ENCODE measurements at regions of chr2 and their contacts with region 1.

Region 1: GRCh38 chr2:196205881-196206435 is 34.6 kb upstream of the STK17B start:
- DNase-seq: no peak
- ATAC-seq: no peak
- H3K4me3 Mint-ChIP-seq: no peak overlapping the region
- H3K27ac Mint-ChIP-seq: peak overlapping the region; percentile 51
- H3K4me1 Mint-ChIP-seq: peaks cover 47% of the 10 kb centered on the region
- H3K27me3 Mint-ChIP-seq: no peaks in the 10 kb centered on the region
- CTCF ChIP-seq: no peak

Region 2: GRCh38 chr2:196101325-196101991 is 104.5 kb before region 1 on chr2:
- CTCF ChIA-PET with region 1: no interaction called
- POLR2A ChIA-PET with region 1: interaction called, 3 read pairs
- intact Hi-C with region 1: loop called (anchors 1 kb)
- DNase-seq: peak; percentile 34
- ATAC-seq: peak; percentile 87
- H3K4me3 Mint-ChIP-seq: peak overlapping the region; percentile 40
- H3K27ac Mint-ChIP-seq: peak overlapping the region; percentile 81
- H3K4me1 Mint-ChIP-seq: peaks cover 77% of the 10 kb centered on the region
- H3K27me3 Mint-ChIP-seq: no peaks in the 10 kb centered on the region
- CTCF ChIP-seq: no peak

Region 3: DNA sequence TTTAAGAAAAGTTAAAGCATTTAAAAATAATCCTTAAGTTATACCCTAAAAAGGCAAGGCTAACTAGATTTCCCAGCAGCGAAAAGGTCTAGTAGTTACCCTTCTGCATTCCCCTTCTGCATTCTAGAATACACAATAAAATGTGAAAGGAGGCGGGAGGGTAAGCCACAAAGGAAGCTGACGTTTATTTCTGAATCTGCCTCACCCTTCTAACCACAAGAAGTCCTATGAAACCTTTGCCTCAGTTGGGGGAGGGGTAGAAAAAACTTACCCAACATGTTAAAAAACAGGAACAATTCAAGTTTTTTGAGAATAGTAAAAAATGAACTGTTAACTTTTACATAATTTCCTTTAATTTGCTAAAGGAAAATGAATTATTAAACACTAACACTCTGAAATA is 45.9 kb before region 1 on chr2:
- CTCF ChIA-PET with region 1: no interaction called
- POLR2A ChIA-PET with region 1: interaction called, 6 read pairs
- intact Hi-C with region 1: loop called (anchors 1 kb)
- DNase-seq: no peak
- ATAC-seq: peak; percentile 75
- H3K4me3 Mint-ChIP-seq: peak overlapping the region; percentile 57
- H3K27ac Mint-ChIP-seq: peak overlapping the region; percentile 84
- H3K4me1 Mint-ChIP-seq: peaks cover 86% of the 10 kb centered on the region
- H3K27me3 Mint-ChIP-seq: no peaks in the 10 kb centered on the region
- CTCF ChIP-seq: no peak

Region 4: DNA sequence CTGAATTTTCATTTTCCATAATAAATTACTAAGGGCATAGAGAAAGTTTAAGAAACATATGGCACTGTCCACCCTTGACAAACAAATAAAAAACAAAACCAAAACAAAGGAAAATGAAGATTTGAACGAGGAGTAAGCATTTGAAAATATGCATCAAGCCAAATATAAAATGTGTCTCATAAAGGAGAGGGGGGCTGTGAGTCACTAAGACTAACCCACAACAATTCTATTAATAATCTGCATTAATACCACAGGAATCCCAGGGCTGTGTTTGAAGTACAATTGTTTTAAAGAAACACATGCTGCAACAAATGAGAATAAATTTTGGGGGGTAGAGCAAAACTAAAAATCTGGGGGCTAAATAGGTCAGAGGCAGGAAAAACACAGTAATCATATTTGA is 19.3 kb after region 1 on chr2:
- CTCF ChIA-PET with region 1: interaction called, 3 read pairs
- POLR2A ChIA-PET with region 1: interaction called, 12 read pairs
- intact Hi-C with region 1: no loop called
- DNase-seq: no peak
- ATAC-seq: no peak
- H3K4me3 Mint-ChIP-seq: no peak overlapping the region
- H3K27ac Mint-ChIP-seq: peak overlapping the region; percentile 8
- H3K4me1 Mint-ChIP-seq: peaks cover 61% of the 10 kb centered on the region
- H3K27me3 Mint-ChIP-seq: no peaks in the 10 kb centered on the region
- CTCF ChIP-seq: no peak

Region 5: GRCh38 chr2:196268538-196269338 is 62.8 kb after region 1 on chr2:
- CTCF ChIA-PET with region 1: no interaction called
- POLR2A ChIA-PET with region 1: interaction called, 3 read pairs
- intact Hi-C with region 1: loop called (anchors 1 kb)
- DNase-seq: no peak
- ATAC-seq: peak; percentile 73
- H3K4me3 Mint-ChIP-seq: peak overlapping the region; percentile 67
- H3K27ac Mint-ChIP-seq: peak overlapping the region; percentile 88
- H3K4me1 Mint-ChIP-seq: peaks cover 64% of the 10 kb centered on the region
- H3K27me3 Mint-ChIP-seq: no peaks in the 10 kb centered on the region
- CTCF ChIP-seq: no peak